Cardiac septum (tissue), 1 donor: ENCODE measurements at regions of chr5 and their contacts with region 1.

Region 1: GRCh38 chr5:179166886-179167841 is 107.0 kb downstream of the ZNF354C start:
- DNase-seq: peak; percentile 74

Region 2: DNA sequence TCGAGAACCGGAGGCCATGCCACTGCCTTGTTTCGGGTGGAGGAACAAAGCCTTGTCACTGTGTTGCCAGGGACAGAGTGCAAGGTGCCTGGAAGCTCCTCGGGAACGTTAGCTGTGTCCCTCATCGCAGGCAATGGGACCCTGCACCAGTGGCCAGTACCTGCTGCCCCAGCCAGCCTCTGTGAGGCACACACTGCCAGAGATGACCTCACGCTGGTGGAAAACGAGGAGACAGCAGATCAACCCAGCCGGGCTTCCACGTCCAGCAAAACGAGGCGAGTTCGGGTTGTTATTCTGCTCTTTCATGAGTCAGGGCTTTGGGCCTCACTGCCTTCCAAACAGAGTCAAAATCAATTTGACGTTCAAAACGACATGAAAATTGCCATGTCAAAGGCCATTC is 74.0 kb after region 1 on chr5:
- intact Hi-C with region 1: no loop called
- DNase-seq: peak; percentile 58

Region 3: GRCh38 chr5:179275941-179276837 is 109.0 kb after region 1 on chr5:
- intact Hi-C with region 1: no loop called
- DNase-seq: no peak

Region 4: DNA sequence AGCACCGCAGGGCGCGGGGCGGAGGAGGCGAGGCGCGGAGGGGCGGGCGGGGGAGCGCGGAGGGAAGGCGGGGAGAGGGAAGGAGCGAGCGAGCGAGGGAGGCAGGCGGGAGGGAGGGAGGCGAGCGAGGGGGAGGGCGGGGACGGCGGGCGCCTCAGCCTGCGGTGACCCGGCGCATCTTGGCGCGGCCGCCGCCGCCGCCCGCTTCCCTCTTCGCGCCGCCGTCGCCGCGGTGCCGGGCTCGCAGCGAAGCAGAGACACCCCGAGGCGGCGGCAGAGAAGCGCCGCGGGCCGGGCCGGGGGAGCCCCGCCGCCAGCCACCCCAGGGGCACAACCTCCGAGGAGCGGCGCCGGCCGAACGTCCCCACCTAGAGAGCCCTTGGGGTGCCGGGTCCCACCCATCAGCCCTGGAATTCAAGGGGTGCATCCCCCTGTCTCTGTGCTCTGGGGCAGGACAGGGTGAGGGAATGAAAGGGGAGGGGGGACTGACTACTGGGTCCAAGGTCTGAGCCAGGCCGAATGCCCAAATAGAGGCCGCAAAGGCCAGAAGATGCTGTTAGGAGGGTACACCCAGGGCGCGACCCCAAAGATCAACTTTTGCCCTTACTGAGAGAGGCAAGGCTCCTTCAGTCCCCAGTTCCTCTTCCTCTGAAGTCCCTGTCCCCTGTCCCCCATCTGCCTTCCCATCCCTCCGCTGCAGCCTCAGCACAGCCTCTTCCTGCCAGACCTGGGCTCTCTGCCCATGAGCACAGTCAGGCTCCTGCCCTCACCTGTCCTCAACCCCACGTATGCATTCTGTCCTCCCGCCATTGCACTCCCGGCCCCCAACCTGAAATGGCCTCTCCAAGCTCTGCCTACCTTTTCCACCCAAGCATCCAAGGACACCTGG is 178.5 kb after region 1 on chr5 and contains the start of gene ADAMTS2:
- intact Hi-C with region 1: loop called (anchors 2 kb)
- DNase-seq: no peak
- total RNA-seq, gene ADAMTS2: 5.9 TPM